Prostate gland (tissue), 2 donors: ENCODE measurements at regions of chr2 and their contacts with region 1.

Region 1: GRCh38 chr2:120343433-120344105 is 2.4 kb upstream of the INHBB start:
- DNase-seq: peak; percentile 86
- H3K4me3 ChIP-seq: peak overlapping the region in 1 of 2 donors; percentile 65
- H3K27ac ChIP-seq: peak overlapping the region; percentile 75 to 92
- H3K4me1 ChIP-seq: peaks cover 7% of the 10 kb centered on the region
- H3K27me3 ChIP-seq: no peaks in the 10 kb centered on the region
- CTCF ChIP-seq: peak; percentile 78 to 97 (median 86)
- POLR2A ChIP-seq: no peak

Region 2: DNA sequence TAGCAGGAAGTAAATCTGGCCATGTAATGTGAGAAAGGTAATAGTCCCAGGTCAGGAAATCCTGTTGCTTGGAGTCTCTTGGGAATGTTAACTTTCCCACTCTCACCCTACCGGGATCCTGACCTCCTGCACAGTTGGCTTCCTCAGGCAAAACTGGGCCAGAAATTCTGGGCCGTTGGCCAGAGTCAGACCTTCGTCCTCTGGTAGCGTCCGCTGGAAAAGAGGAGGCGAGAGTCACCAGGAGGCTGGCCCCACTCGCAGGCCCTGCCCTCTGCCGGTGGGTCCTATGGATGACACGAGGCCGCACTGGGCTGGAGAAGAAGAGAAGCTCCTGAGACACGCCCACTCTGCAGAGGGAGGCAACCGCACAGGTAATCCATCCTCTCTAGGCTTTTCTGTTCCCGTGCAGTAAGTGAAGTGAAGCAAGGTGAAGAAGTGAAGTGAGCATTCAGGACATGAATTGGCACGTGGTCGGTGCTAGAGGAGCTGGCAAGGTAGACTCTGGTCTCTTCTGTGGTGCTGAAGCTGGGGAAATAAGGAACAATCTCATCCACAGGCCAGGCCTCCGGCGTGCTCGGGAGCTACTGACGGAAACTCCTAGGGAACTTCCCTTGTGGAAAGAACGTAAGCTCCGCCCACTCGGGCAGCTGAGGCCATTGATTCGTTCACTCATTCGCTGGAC is 209.4 kb after region 1 on chr2:
- intact Hi-C with region 1: loop called (anchors 5 kb)
- DNase-seq: peak; percentile 85
- H3K4me3 ChIP-seq: no peak overlapping the region
- H3K27ac ChIP-seq: no peak overlapping the region
- H3K4me1 ChIP-seq: no peaks in the 10 kb centered on the region
- H3K27me3 ChIP-seq: no peaks in the 10 kb centered on the region
- CTCF ChIP-seq: peak in 3 of 4 experiments; percentile 58 to 82 (median 79)
- POLR2A ChIP-seq: no peak

Region 3: DNA sequence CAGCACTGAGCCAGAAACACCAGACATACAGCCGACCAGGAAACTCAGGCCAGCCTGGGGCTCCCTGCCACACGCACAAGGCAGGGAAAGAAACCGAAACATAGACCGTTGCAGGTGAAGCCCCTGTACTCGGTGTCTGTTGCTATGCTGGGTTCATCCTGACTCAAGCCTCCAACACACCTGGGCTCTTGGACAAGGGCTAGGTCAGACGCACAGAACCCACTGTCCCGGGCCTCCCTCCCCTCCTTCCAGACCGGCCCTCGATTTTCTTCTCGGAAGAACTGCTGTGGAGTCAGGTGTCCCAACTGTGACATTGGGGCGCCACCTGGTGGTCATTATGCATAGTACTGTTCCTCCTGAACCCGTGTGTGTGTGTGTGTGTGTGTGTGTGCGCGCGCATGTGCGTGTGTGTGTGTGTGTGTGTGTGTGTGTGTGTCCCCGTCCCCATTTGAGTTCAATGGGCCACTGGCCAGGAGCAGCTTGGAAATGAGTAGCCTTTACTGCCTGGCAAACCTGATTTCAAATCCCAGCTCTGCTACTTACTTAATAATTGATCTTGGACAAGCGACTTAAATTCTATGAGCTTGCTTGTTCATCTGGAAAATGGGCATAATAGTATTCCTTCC is 336.7 kb after region 1 on chr2:
- intact Hi-C with region 1: loop called (anchors 1 kb)
- DNase-seq: peak; percentile 89
- H3K4me3 ChIP-seq: no peak overlapping the region
- H3K27ac ChIP-seq: no peak overlapping the region
- H3K4me1 ChIP-seq: peaks cover 8% of the 10 kb centered on the region
- H3K27me3 ChIP-seq: no peaks in the 10 kb centered on the region
- CTCF ChIP-seq: peak; percentile 63 to 88 (median 78)
- POLR2A ChIP-seq: no peak

Region 4: GRCh38 chr2:121076885-121077549 is 733.4 kb after region 1 on chr2:
- intact Hi-C with region 1: loop called (anchors 10 kb)
- DNase-seq: peak; percentile 46
- H3K4me3 ChIP-seq: no peak overlapping the region
- H3K27ac ChIP-seq: no peak overlapping the region
- H3K4me1 ChIP-seq: no peaks in the 10 kb centered on the region
- H3K27me3 ChIP-seq: no peaks in the 10 kb centered on the region
- CTCF ChIP-seq: peak; percentile 58 to 85 (median 66)
- POLR2A ChIP-seq: no peak